ENCODE measurements at regions of chr7 and their contacts with region 1.

Region 1: DNA sequence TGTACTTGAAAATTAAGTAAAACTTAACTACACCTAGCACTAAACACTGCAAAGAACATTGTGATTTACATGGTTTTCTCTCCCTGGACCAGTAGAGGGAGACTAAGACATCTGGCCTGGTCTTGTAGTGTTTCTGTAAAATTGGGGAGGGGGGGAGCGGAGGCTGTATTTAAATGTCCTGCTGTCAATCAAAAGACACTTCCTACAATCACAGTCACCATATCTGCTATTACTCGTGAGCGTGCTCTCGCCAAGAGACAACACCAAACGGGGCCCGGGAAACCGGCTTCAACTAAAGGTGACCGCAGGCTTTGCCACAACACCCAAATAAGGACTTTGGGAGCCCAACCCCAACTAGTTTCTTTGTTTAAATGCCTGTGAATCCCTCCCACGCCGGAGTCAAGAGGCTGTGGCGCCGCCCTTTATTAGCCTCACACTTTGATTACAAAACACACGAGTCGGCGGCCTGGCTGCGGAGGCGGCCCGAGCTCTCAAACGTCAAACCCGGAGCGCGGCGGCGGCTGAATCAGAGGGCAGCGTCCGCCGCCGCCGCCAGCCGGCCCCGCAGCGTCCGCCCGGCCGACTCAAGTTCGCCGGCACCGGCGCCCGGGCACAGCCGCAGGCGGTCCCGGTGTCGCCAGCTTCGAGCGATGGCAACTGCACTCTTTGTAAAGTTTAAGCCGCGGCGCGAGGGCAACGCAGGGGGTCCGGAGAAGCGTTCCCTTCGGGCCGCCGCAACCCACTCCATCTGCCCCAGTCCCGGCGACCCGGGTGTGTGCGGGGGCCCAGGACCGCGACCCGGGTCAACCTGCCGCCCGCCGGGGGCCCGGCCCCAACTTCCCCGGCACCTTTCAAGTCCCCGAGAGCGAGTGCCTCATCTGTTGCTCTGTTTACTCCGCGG is 1.3 kb downstream of the KDM7A start:
- DNase-seq: peak; percentile 98
- H3K4me3 Mint-ChIP-seq: peak overlapping the region; percentile 82
- H3K27ac Mint-ChIP-seq: peak overlapping the region; percentile 87
- H3K4me1 Mint-ChIP-seq: peaks cover 10% of the 10 kb centered on the region
- H3K27me3 Mint-ChIP-seq: peaks cover 2% of the 10 kb centered on the region
- CTCF ChIP-seq: peak; percentile 69

Region 2: DNA sequence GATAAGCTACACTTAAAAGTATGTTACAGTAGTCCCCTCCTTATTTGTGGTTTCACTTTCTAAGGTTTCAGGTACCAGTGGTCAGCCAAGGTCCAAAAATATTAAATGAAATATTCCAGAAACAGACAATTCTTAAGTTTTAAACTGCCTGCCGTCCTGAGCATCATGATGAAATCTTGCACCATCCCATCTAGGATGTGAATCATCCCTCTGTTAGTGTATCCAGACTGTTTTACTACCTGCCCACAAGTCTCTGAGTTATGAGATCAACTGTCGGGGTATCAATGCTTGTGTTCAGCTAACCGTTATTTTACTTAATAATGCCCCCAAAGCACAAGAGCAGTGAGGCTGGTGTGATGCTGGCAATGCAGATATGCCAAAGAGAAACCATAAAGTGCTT is 10.0 kb before region 1 on chr7:
- CTCF ChIA-PET with region 1: interaction called, 3 read pairs
- POLR2A ChIA-PET with region 1: interaction called, 37 read pairs
- intact Hi-C with region 1: no loop called
- DNase-seq: peak; percentile 78
- H3K4me3 Mint-ChIP-seq: no peak overlapping the region
- H3K27ac Mint-ChIP-seq: peak overlapping the region; percentile 74
- H3K4me1 Mint-ChIP-seq: peaks cover 8% of the 10 kb centered on the region
- H3K27me3 Mint-ChIP-seq: no peaks in the 10 kb centered on the region
- CTCF ChIP-seq: no peak

Region 3: GRCh38 chr7:140200061-140200989 is 24.9 kb after region 1 on chr7:
- CTCF ChIA-PET with region 1: interaction called, 4 read pairs
- POLR2A ChIA-PET with region 1: interaction called, 33 read pairs
- intact Hi-C with region 1: no loop called
- DNase-seq: peak; percentile 65
- H3K4me3 Mint-ChIP-seq: peak overlapping the region; percentile 48
- H3K27ac Mint-ChIP-seq: peak overlapping the region; percentile 39
- H3K4me1 Mint-ChIP-seq: no peaks in the 10 kb centered on the region
- H3K27me3 Mint-ChIP-seq: no peaks in the 10 kb centered on the region
- CTCF ChIP-seq: no peak

Region 4: GRCh38 chr7:140326116-140326928 is 150.9 kb after region 1 on chr7:
- CTCF ChIA-PET with region 1: interaction called, 12 read pairs
- POLR2A ChIA-PET with region 1: interaction called, 19 read pairs
- intact Hi-C with region 1: loop called (anchors 1 kb)
- DNase-seq: peak; percentile 72
- H3K4me3 Mint-ChIP-seq: no peak overlapping the region
- H3K27ac Mint-ChIP-seq: no peak overlapping the region
- H3K4me1 Mint-ChIP-seq: no peaks in the 10 kb centered on the region
- H3K27me3 Mint-ChIP-seq: no peaks in the 10 kb centered on the region
- CTCF ChIP-seq: peak; percentile 78

Region 5: GRCh38 chr7:140479062-140479738 is 303.7 kb after region 1 on chr7 and contains the start of gene MKRN1:
- CTCF ChIA-PET with region 1: no interaction called
- POLR2A ChIA-PET with region 1: interaction called, 9 read pairs
- intact Hi-C with region 1: loop called (anchors 5 kb)
- DNase-seq: peak; percentile 94
- H3K4me3 Mint-ChIP-seq: peak within 1 kb of the TSS; percentile 85
- H3K27ac Mint-ChIP-seq: peak within 1 kb of the TSS; percentile 90
- H3K4me1 Mint-ChIP-seq: peaks cover 5% of the 10 kb centered on the region
- H3K27me3 Mint-ChIP-seq: no peaks in the 10 kb centered on the region
- CTCF ChIP-seq: no peak
- total RNA-seq, gene MKRN1: 59.8 and 65.5 TPM in 2 replicates

Measured in MCF 10A (cell line).